SK-N-SH (cell line): ENCODE measurements at regions of chr2 and their contacts with region 1.

Region 1: DNA sequence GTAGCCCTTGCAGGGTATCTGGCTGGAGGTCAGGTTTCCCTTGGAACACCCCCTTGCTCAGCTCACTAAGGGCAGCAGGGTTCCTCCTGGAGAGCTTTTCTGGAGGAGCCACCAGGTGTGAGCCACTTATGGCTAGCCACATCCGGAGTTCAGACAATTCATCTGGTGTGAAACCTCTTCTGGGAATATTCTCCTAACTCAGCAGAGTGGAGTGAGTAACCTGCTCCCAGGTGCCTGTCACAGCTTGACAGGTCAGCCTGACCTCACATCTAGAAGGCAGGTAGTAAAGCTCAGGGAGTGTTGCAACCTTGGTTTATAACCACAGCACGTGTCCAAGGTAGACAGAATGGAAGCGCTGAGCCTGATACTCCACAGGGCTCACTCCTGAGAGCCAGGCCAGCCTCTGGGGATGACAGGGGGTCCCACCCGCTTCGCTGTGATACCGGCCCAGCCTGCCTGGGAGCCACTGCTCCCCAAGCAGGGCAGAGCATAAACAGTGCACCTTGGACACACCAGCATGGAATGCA is 62.6 kb upstream of the TGFA start:
- DNase-seq: no peak
- H3K4me3 ChIP-seq: no peak overlapping the region
- H3K27ac ChIP-seq: no peak overlapping the region
- H3K4me1 ChIP-seq: no peaks in the 10 kb centered on the region
- H3K27me3 ChIP-seq: peaks cover 22% of the 10 kb centered on the region; the same call in 1 of the 2 replicates
- CTCF ChIP-seq: no peak
- EP300 ChIP-seq: no peak
- RAD21 ChIP-seq: no peak

Region 2: DNA sequence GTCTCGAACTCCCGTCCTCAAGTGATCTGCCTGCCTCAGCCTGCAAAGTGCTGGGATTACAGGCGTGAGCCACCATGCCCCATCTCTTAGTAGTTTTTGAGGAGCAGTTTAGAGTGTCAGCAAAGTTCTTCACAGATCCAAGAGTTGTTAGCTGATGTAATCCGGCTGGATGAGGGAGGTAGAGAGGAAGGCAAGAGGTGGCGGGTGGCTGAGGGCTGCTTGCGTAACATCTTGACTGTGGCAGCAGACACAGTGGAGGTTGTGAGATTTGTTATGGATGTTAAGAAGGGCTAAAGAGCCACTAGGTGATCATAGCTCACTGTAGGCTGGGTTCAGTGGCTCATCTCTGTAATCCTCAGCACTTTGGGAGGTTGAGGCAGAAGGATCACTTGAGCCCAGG is 294.9 kb before region 1 on chr2:
- CTCF ChIA-PET with region 1: interaction called, 10 read pairs
- POLR2A ChIA-PET with region 1: no interaction called
- DNase-seq: no peak
- H3K4me3 ChIP-seq: no peak overlapping the region
- H3K27ac ChIP-seq: no peak overlapping the region
- H3K4me1 ChIP-seq: no peaks in the 10 kb centered on the region
- H3K27me3 ChIP-seq: peaks cover 22% of the 10 kb centered on the region; the same call in 1 of the 2 replicates
- CTCF ChIP-seq: no peak
- EP300 ChIP-seq: no peak
- RAD21 ChIP-seq: no peak

Region 3: DNA sequence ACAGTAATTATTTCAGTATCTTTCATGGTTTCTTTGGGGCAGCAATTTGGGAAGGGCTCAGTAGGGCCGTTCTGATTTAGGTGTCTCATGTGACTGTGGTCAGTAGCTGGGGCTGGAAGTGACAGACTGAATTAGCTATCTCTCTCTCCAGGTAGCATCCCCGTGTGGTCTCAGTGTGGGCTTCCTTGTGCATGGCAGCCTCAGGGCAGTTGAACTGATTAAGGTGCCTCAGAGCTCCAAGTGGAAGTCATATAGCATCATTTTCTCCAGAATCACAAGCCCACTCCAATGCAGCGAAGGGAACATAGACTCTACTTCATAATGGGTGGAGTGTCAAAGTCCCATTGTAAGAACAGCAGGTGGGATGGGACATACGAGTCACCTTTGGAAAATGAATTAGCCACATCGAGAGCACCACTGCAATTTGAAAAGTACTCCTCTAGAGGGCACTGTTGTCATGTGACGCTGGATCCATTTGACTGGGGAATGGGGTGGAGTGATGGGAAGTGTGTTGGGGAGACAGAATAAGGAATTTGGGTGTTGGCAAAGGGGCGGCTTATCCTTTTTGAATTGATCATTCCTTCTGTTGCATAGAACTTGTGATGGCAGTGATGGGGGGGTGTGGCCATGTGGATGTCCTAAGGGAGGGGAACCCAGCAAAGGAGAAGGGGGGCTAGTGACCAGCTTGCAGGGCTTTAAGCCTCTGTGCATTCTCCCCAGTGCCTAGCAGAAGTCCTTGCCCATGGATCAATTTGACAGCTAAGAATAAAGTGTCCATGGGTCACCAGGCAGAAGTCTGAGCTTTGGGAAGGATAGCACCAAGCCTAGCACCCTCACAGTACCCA is 275.1 kb before region 1 on chr2:
- CTCF ChIA-PET with region 1: interaction called, 125 read pairs
- POLR2A ChIA-PET with region 1: no interaction called
- DNase-seq: peak; percentile 76
- H3K4me3 ChIP-seq: no peak overlapping the region; a peak in 1 of 4 replicates
- H3K27ac ChIP-seq: no peak overlapping the region
- H3K4me1 ChIP-seq: no peaks in the 10 kb centered on the region
- H3K27me3 ChIP-seq: peaks cover 13% of the 10 kb centered on the region; the same call in 1 of the 2 replicates
- CTCF ChIP-seq: peak; percentile 81
- EP300 ChIP-seq: no peak
- RAD21 ChIP-seq: peak; percentile 93

Region 4: DNA sequence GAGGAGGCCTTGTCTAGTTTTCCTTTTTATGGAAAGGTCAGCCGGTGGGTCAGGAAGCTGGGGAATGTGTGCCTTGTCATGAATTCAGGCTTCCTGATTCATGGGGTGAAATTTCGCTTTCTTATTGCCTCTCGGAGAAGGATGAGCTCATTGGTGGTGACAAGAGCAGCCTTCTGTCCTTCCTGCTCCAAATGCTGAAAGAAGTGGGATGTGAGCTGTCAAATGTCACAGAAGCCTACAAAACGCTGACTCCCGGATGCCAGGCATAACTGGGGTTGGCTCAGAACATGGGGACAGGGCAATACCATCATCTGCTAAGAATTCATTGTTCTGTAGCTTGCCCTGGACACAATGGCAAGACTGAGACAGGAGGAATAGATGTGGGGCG is 258.6 kb before region 1 on chr2:
- CTCF ChIA-PET with region 1: interaction called, 20 read pairs
- POLR2A ChIA-PET with region 1: no interaction called
- DNase-seq: no peak
- H3K4me3 ChIP-seq: no peak overlapping the region
- H3K27ac ChIP-seq: no peak overlapping the region
- H3K4me1 ChIP-seq: no peaks in the 10 kb centered on the region
- H3K27me3 ChIP-seq: no peaks in the 10 kb centered on the region
- CTCF ChIP-seq: no peak
- EP300 ChIP-seq: no peak
- RAD21 ChIP-seq: no peak

Region 5: DNA sequence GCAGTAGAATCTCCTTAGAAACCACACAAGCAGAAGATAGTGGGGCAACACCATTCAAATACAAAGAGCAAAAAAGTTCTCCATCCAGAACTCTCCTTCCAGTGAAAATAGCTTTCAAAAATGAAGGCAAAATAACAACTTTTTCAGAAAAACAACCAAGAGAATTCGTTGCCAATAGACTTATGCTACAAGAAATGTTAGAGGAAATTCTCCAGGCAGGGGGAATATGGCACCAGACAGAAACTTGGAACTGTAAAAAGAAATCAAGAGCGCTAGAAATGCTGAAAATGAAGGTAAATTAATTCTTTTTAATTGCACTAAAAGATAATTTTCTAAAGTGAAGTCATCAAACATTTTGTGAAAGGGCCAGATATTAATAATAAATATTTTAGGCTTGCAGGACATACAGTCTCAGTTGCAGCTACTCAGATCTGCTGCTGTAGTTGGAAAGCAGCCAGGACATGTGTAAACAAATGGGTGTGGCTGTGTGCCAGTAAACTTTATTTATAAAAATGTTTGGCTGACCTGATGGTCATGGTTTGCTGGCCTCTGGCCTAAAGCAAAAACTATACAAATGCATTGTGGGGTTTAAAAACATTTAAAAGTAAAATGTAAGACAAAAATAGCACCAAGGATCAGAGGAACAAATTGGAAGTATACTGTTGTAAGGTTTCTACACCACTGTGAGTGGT is 11.1 kb after region 1 on chr2:
- CTCF ChIA-PET with region 1: interaction called, 52 read pairs
- POLR2A ChIA-PET with region 1: no interaction called
- DNase-seq: no peak
- H3K4me3 ChIP-seq: no peak overlapping the region
- H3K27ac ChIP-seq: no peak overlapping the region
- H3K4me1 ChIP-seq: no peaks in the 10 kb centered on the region
- H3K27me3 ChIP-seq: peaks cover 16% of the 10 kb centered on the region; the same call in 1 of the 2 replicates
- CTCF ChIP-seq: no peak
- EP300 ChIP-seq: no peak
- RAD21 ChIP-seq: no peak

Region 6: GRCh38 chr2:70647873-70648481 is 31.7 kb after region 1 on chr2:
- CTCF ChIA-PET with region 1: interaction called, 14 read pairs
- POLR2A ChIA-PET with region 1: no interaction called
- DNase-seq: peak; percentile 73
- H3K4me3 ChIP-seq: peak overlapping the region in 1 of 2 experiments; percentile 47; a peak in 1 of 4 replicates
- H3K27ac ChIP-seq: no peak overlapping the region
- H3K4me1 ChIP-seq: no peaks in the 10 kb centered on the region
- H3K27me3 ChIP-seq: 0 out of 2 replicates have a peak, but pooled peaks cover 6% of the 10 kb centered on the region
- CTCF ChIP-seq: peak; percentile 93
- EP300 ChIP-seq: no peak
- RAD21 ChIP-seq: peak; percentile 91

Region 7: GRCh38 chr2:70709275-70710037 is 93.2 kb after region 1 on chr2:
- CTCF ChIA-PET with region 1: no interaction called
- POLR2A ChIA-PET with region 1: no interaction called
- DNase-seq: no peak
- H3K4me3 ChIP-seq: no peak overlapping the region
- H3K27ac ChIP-seq: no peak overlapping the region
- H3K4me1 ChIP-seq: no peaks in the 10 kb centered on the region; a peak in 1 of 4 replicates
- H3K27me3 ChIP-seq: no peaks in the 10 kb centered on the region
- CTCF ChIP-seq: no peak
- EP300 ChIP-seq: no peak
- RAD21 ChIP-seq: no peak